ENCODE measurements at regions of chr19 and their contacts with region 1.

Region 1: DNA sequence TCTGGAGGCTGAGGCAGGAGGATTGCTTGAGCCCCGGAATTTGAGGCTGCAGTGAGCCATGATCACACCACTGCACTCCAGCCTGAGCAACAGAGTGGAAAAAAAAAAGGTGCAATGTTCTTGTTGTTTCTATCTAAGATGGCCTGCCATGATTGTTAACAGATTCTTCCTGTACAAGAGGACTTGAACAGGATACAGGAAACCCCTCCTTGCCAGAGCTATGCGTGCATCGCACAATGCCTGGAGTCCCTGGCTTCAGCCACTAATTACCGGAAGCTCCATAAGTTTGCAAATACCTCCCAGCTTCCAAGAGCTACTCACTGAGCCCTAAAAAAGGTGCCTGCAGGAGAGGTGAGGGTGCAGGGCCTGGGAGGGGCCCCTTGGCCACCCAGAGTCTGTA is 13.1 kb upstream of the HIF3A start:
- DNase-seq: no peak
- H3K4me3 ChIP-seq: no peak overlapping the region
- H3K27me3 ChIP-seq: no peaks in the 10 kb centered on the region
- CTCF ChIP-seq: no peak

Region 2: DNA sequence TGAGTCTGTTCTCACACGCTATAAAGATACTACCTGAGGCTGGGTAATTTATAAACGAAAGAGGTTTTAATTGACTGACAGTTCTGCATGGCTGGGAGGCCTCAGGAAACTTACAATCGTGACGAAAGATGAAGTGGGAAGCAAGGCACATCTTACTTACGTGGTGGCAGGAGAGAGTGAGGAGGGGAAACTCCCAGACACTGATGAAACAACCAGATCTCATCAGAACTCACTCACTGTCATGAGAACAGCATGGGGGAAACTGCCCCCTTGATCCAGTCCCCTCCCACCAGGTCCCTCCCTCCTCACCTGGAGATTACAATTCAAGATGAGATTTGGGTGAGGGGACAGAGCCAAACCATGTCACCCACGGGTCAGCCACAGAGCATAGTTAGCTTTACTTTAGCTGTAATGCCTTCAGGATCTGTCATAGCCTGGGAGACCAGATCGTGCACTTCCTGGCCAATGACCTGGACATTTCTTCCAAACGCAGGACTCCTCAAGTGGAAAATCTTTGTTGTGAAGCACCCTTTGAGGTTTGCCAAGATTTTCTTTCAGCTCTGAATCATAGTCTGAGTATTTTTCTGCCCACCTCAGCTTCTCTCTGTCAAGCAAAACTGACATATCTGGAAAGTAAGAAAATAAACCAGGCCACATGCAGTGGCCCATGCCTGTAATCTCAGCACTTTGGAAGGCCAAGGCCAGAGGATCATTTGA is 12.1 kb before region 1 on chr19:
- CTCF ChIA-PET with region 1: interaction called, 21 read pairs
- POLR2A ChIA-PET with region 1: no interaction called
- DNase-seq: peak; percentile 71
- H3K4me3 ChIP-seq: no peak overlapping the region
- H3K27me3 ChIP-seq: peaks cover 6% of the 10 kb centered on the region
- CTCF ChIP-seq: no peak

Region 3: GRCh38 chr19:46351241-46352041 is 67.7 kb after region 1 on chr19:
- CTCF ChIA-PET with region 1: interaction called, 11 read pairs
- POLR2A ChIA-PET with region 1: no interaction called
- DNase-seq: no peak
- H3K4me3 ChIP-seq: no peak overlapping the region
- H3K27me3 ChIP-seq: no peaks in the 10 kb centered on the region
- CTCF ChIP-seq: no peak

Region 4: GRCh38 chr19:46404055-46404752 is 120.4 kb after region 1 on chr19:
- CTCF ChIA-PET with region 1: interaction called, 33 read pairs
- POLR2A ChIA-PET with region 1: no interaction called
- DNase-seq: no peak
- H3K4me3 ChIP-seq: peak overlapping the region; percentile 28
- H3K27me3 ChIP-seq: no peaks in the 10 kb centered on the region; the same call in 1 of the 2 replicates
- CTCF ChIP-seq: peak; percentile 51; the same call in 1 of the 2 replicates

Region 5: GRCh38 chr19:46487802-46488445 is 204.2 kb after region 1 on chr19:
- CTCF ChIA-PET with region 1: interaction called, 18 read pairs
- POLR2A ChIA-PET with region 1: no interaction called
- DNase-seq: no peak
- H3K4me3 ChIP-seq: peak overlapping the region; percentile 20
- H3K27me3 ChIP-seq: peaks cover 9% of the 10 kb centered on the region; the same call in 1 of the 2 replicates
- CTCF ChIP-seq: peak; percentile 95